GM10248 (cell line): ENCODE measurements at regions of chr17 and their contacts with region 1.

Region 1: GRCh38 chr17:16537130-16537458 is 31.9 kb downstream of the ZNF287 start:
- DNase-seq: no peak
- CTCF ChIP-seq: no peak

Region 2: GRCh38 chr17:16339402-16339801 is 197.7 kb before region 1 on chr17:
- CTCF ChIA-PET with region 1: no interaction called
- POLR2A ChIA-PET with region 1: no interaction called
- DNase-seq: no peak
- CTCF ChIP-seq: no peak

Region 3: GRCh38 chr17:16407911-16408588 is 129.0 kb before region 1 on chr17:
- CTCF ChIA-PET with region 1: no interaction called
- POLR2A ChIA-PET with region 1: no interaction called
- DNase-seq: peak; percentile 87
- CTCF ChIP-seq: no peak

Region 4: GRCh38 chr17:16521070-16521727 is 15.9 kb before region 1 on chr17:
- CTCF ChIA-PET with region 1: interaction called, 24 read pairs
- POLR2A ChIA-PET with region 1: interaction called, 4 read pairs
- DNase-seq: peak; percentile 86
- CTCF ChIP-seq: peak; percentile 77

Region 5: DNA sequence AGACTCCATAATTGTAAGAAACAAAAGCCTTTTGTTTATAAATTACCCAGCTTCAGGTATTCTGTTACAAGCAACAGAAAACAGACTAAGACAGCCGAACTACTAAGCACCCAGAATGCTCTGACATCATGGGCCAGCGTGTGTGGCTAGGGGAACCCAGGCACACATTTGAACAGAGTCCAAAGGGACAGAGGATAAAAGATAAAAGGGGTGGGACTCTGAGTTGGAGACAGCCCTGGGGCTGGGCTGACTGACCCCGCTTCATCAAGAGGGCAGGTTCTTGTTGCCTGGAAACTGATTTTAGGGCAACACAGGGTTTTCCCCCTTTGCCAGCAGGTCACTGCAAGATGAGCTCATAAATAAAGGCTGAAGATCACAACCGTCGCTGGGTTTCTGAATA is 62.4 kb after region 1 on chr17:
- CTCF ChIA-PET with region 1: no interaction called
- POLR2A ChIA-PET with region 1: no interaction called
- DNase-seq: no peak
- CTCF ChIP-seq: no peak